ENCODE measurements at regions of chr7 and their contacts with region 1.

Region 1: DNA sequence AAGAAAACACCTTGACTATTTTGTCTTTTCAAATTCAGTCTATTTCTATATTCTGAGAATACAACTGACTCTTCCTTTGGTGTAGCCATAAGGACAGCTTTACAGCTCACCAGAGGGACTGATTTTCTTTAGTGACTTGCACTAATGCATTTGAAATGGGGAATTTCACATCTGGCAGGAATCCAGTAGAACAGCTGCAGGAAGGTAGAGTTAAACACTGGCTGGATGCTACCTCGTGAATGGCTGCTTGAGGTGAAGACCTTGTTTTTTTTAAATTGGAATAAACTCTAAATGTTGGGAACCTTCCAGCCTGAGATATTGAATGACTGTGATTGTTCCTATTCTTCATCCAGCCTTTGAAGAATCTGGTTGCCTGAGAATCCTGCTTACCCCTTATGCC is 139.5 kb upstream of the STK17A start:
- DNase-seq: no peak

Region 2: GRCh38 chr7:43394441-43395130 is 48.8 kb before region 1 on chr7:
- CTCF ChIA-PET with region 1: no interaction called
- POLR2A ChIA-PET with region 1: no interaction called
- DNase-seq: no peak

Region 3: GRCh38 chr7:43454936-43455518 is 11.6 kb after region 1 on chr7:
- CTCF ChIA-PET with region 1: interaction called, 13 read pairs
- POLR2A ChIA-PET with region 1: no interaction called
- DNase-seq: peak; percentile 46

Region 4: DNA sequence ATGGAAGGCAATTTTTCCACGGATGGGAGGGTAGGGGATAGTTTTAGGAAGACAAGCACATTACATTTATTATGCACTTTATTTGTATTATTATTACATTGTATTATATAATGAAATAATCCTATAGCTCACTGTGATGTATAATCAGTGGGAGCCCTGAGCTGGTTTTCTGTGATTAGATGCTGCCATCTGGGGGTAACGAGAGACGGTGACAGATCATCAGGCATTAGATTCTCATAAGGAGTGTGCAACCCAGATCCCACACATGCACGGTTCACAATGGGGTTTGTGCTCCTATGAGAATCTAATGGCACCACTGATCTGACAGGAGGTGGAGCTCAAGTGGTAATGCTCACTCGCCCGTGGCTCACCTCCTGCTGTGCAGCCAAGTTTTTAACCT is 35.7 kb after region 1 on chr7:
- CTCF ChIA-PET with region 1: no interaction called
- POLR2A ChIA-PET with region 1: no interaction called
- DNase-seq: no peak

Region 5: GRCh38 chr7:43815373-43815772 is 372.0 kb after region 1 on chr7:
- CTCF ChIA-PET with region 1: interaction called, 15 read pairs
- POLR2A ChIA-PET with region 1: no interaction called
- DNase-seq: no peak